Activated T-helper 1 cell treated with anti-CD3 and anti-CD28 coated beads, Interleukin-12 subunit alpha, Interleukin-12 subunit beta, Interleukin-2, Interleukin-4 antibody, amounts not matched to agents 30 ng/mL and 10 ng/mL and 1 ng/mL, durations not matched to agents 14 hours and 24 hours and 36 hours (primary cell): ENCODE measurements at regions of chr3 and their contacts with region 1.

Region 1: DNA sequence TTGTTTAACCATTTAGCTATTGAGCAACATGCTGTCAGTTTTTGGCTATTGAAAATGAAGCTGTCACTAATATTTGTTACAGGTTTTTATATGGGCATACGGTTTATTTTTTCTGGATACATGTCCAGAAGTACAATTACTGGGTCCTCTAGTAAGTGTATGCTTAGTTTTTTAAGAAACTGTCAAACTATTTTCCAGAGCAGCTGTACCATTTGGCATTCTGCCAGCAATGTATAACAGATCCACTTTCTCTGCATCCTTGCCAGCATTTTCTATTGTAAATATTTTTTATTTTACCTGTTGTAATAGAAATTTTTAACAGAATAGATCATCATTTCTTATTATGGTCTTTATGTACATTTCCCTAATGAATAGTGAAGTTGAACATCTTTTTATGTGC is 658.8 kb downstream of the EDEM1 start:
- DNase-seq: no peak
- H3K4me3 Mint-ChIP-seq: no peak overlapping the region
- H3K27ac Mint-ChIP-seq: no peak overlapping the region
- H3K4me1 Mint-ChIP-seq: no peaks in the 10 kb centered on the region
- H3K27me3 Mint-ChIP-seq: no peaks in the 10 kb centered on the region

Region 2: GRCh38 chr3:5657106-5657505 is 189.2 kb before region 1 on chr3:
- intact Hi-C with region 1: no loop called
- DNase-seq: no peak
- H3K4me3 Mint-ChIP-seq: no peak overlapping the region
- H3K27ac Mint-ChIP-seq: no peak overlapping the region
- H3K4me1 Mint-ChIP-seq: no peaks in the 10 kb centered on the region
- H3K27me3 Mint-ChIP-seq: no peaks in the 10 kb centered on the region

Region 3: DNA sequence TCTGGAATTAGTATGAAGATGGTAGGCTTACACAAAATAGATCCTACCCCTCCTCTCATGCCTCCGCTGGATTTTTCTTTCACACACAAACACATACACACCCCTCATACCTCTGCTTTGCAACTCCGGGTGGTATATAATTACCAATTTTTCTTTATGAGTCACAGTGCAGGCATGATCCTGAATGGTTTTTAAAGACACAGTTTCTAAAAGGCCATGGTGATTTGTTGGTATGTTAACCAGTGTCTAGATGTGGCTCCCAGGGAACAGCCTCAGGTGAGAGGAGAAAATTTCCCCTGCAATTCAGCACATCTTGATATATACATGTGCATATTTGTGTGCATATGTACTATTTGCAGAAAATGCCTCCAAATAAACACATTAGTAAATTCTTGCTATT is 310.1 kb after region 1 on chr3:
- intact Hi-C with region 1: loop called (anchors 5 kb)
- DNase-seq: no peak
- H3K4me3 Mint-ChIP-seq: no peak overlapping the region
- H3K27ac Mint-ChIP-seq: no peak overlapping the region
- H3K4me1 Mint-ChIP-seq: no peaks in the 10 kb centered on the region
- H3K27me3 Mint-ChIP-seq: no peaks in the 10 kb centered on the region